Thyroid gland (tissue), 4 donors: ENCODE measurements at regions of chr11 and their contacts with region 1.

Region 1: GRCh38 chr11:32713496-32713895 is 81.0 kb downstream of the CCDC73 start:
- DNase-seq: no peak
- H3K4me3 ChIP-seq: no peak overlapping the region
- H3K27ac ChIP-seq: no peak overlapping the region
- H3K4me1 ChIP-seq: no peaks in the 10 kb centered on the region
- H3K27me3 ChIP-seq: peaks cover 3% of the 10 kb centered on the region
- CTCF ChIP-seq: peak in 5 of 6 experiments; percentile 13 to 64 (median 60)
- POLR2A ChIP-seq: no peak

Region 2: GRCh38 chr11:32255841-32256240 is 457.7 kb before region 1 on chr11:
- intact Hi-C with region 1: no loop called
- DNase-seq: no peak
- H3K4me3 ChIP-seq: no peak overlapping the region
- H3K27ac ChIP-seq: no peak overlapping the region
- H3K4me1 ChIP-seq: no peaks in the 10 kb centered on the region
- H3K27me3 ChIP-seq: no peaks in the 10 kb centered on the region
- CTCF ChIP-seq: no peak
- POLR2A ChIP-seq: no peak

Region 3: DNA sequence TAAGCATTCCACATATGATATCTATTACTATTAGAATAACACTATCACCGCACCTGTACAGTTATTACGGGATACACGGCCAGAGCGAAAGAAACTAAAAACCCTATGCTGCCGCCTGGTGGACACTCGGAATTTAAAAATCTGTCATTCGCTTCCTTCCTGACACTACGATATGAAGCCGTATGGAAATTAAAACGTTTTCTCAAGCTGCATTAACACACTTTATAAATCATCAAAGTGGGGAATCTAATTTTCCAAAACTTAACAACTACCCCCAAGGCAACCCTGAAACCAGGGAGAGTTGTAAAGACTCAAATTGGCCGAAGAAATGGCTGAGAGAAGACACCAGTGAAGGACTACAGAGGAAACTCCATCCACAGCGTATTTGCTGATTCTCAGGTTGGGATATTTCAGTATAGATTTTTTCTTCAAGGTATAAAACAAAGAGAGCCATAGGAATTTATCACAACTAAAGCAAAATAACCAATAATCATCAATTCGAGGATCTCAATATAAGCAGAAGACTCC is 79.5 kb after region 1 on chr11:
- intact Hi-C with region 1: loop called (anchors 5 kb)
- DNase-seq: peak; percentile 60 to 69
- H3K4me3 ChIP-seq: no peak overlapping the region
- H3K27ac ChIP-seq: no peak overlapping the region
- H3K4me1 ChIP-seq: no peaks in the 10 kb centered on the region
- H3K27me3 ChIP-seq: no peaks in the 10 kb centered on the region
- CTCF ChIP-seq: peak; percentile 30 to 84 (median 63)
- POLR2A ChIP-seq: no peak